ENCODE measurements at regions of chr7 and their contacts with region 1.

Region 1: DNA sequence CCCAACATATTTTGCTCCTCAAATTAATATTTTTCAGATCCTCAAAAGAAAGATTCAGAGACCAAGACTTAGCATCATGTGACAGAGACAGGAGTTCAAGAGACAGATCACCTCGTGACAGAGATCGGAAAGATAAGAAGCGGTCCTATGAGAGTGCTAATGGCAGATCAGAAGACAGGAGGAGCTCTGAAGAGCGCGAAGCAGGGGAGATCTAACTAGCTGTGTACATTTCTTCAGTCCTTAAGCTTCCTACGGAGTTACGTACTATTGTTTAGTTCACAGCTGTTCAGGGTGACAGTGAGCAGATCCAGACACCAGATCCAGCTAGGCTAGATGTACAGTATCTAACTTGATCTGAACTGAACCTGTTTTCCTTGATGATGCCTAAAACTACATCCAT is 61.3 kb downstream of the KLRG2 start:
- DNase-seq: no peak
- H3K4me3 ChIP-seq: no peak overlapping the region
- H3K27ac ChIP-seq: no peak overlapping the region
- H3K4me1 ChIP-seq: no peaks in the 10 kb centered on the region
- H3K27me3 ChIP-seq: no peaks in the 10 kb centered on the region

Region 2: GRCh38 chr7:139436806-139437205 is 14.7 kb after region 1 on chr7:
- CTCF ChIA-PET with region 1: interaction called, 28 read pairs
- POLR2A ChIA-PET with region 1: no interaction called
- DNase-seq: no peak
- H3K4me3 ChIP-seq: no peak overlapping the region
- H3K27ac ChIP-seq: no peak overlapping the region
- H3K4me1 ChIP-seq: peaks cover 0 to 5% (median 1%) of the 10 kb centered on the region in 4 experiments
- H3K27me3 ChIP-seq: no peaks in the 10 kb centered on the region